ENCODE measurements at regions of chr20 and their contacts with region 1.

Region 1: DNA sequence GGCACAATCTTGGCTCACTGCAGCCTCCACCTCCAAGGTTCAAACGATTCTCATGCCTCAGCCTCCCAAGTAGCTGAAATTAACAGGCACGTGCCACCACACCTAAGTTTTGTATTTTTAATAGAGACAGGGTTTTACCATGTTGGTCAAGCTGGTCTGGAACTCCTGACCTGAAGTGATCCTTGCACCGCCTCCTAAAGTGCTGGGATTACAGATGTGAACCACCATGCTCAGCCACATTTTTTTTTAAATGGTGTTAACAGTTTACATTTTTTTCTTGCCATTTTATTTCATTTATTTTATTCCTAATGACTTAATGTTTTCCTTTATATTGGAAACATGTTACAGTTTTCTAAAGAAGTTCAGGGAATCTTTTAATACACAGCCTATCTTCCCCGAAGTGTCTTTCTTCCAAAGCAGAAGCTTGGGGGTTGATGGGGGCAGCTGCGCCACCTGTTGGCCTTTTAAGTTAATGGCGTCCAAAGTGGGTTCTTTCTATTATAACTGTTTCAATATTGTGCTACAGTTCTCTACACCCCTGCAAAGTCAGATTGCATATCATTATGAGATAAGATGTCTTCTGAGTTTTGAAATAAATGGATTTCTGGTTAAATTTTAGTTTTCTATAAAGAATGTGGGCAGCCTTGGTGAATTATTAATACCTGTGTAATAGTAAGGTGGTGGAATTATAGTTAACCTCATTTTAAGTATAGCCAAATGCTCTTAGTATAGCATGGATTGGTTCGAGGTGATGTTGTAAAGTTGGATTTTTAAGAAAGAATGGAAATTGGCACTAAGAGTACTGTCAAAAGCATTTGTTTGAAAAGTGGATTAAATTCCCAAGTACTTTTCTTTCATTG is 42.0 kb upstream of the PLCG1 start:
- DNase-seq: peak; percentile 68
- ATAC-seq: peak; percentile 54
- H3K4me3 Mint-ChIP-seq: no peak overlapping the region
- H3K27ac Mint-ChIP-seq: no peak overlapping the region
- H3K4me1 Mint-ChIP-seq: peaks cover 10% of the 10 kb centered on the region
- H3K27me3 Mint-ChIP-seq: no peaks in the 10 kb centered on the region

Region 2: GRCh38 chr20:40970201-40970600 is 125.1 kb before region 1 on chr20:
- CTCF ChIA-PET with region 1: interaction called, 43 read pairs
- POLR2A ChIA-PET with region 1: no interaction called
- intact Hi-C with region 1: loop called (anchors 1 kb)
- DNase-seq: no peak
- ATAC-seq: no peak
- H3K4me3 Mint-ChIP-seq: no peak overlapping the region
- H3K27ac Mint-ChIP-seq: no peak overlapping the region
- H3K4me1 Mint-ChIP-seq: peaks cover 9% of the 10 kb centered on the region
- H3K27me3 Mint-ChIP-seq: peaks cover 6% of the 10 kb centered on the region

Region 3: GRCh38 chr20:41028348-41029148 is 66.8 kb before region 1 on chr20 and contains the start of gene TOP1:
- CTCF ChIA-PET with region 1: interaction called, 7 read pairs
- POLR2A ChIA-PET with region 1: interaction called, 3 read pairs
- intact Hi-C with region 1: loop called in 1 of 2 experiments (anchors 2 kb)
- DNase-seq: peak; percentile 100
- ATAC-seq: peak; percentile 98
- H3K4me3 Mint-ChIP-seq: peak within 1 kb of the TSS; percentile 84
- H3K27ac Mint-ChIP-seq: peak within 1 kb of the TSS; percentile 92
- H3K4me1 Mint-ChIP-seq: peaks cover 45% of the 10 kb centered on the region
- H3K27me3 Mint-ChIP-seq: no peaks in the 10 kb centered on the region
- total RNA-seq, gene TOP1: 111 to 124 TPM

Region 4: DNA sequence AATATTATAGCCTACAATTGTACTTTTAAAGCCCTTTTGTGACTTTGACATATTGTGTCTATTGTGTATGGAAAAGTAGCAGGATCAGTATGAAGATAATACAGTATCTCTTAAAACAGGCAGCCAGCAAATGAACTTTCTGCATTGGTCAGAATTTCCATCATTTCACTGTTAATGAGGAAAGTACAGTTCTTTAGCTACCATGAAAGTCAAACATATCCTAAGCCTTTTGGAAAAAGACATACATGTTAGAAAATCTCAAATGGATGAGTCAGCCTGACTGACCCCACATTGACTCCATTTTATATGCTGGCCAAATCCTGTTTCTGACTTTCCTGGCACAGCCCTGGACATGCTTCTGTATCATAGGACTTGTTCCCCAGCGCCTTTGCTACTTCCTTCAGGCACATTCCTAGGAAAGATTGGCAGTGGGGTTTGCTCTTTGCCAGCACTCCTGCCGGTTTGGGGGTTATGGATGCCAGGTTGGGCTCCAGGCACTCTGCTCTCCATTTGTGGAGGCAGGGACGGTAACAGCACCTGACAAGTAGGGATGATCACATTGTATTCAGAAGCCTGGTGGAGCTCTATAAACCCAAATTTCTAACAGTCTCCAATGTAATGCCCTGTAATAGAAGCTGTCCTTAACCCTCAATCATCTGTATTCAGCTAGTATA is 23.0 kb before region 1 on chr20:
- CTCF ChIA-PET with region 1: interaction called, 11 read pairs
- POLR2A ChIA-PET with region 1: no interaction called
- intact Hi-C with region 1: no loop called
- DNase-seq: no peak
- ATAC-seq: peak; percentile 31
- H3K4me3 Mint-ChIP-seq: no peak overlapping the region
- H3K27ac Mint-ChIP-seq: peak overlapping the region; percentile 70
- H3K4me1 Mint-ChIP-seq: peaks cover 79% of the 10 kb centered on the region
- H3K27me3 Mint-ChIP-seq: no peaks in the 10 kb centered on the region

Region 5: GRCh38 chr20:41161886-41162285 is 66.5 kb after region 1 on chr20:
- CTCF ChIA-PET with region 1: interaction called, 12 read pairs
- POLR2A ChIA-PET with region 1: interaction called, 3 read pairs
- intact Hi-C with region 1: no loop called
- DNase-seq: no peak
- ATAC-seq: no peak
- H3K4me3 Mint-ChIP-seq: no peak overlapping the region
- H3K27ac Mint-ChIP-seq: peak overlapping the region; percentile 72
- H3K4me1 Mint-ChIP-seq: peaks cover 59% of the 10 kb centered on the region
- H3K27me3 Mint-ChIP-seq: no peaks in the 10 kb centered on the region

Measured in activated CD4-positive, alpha-beta T cell treated with anti-CD3 and anti-CD28 coated beads for 36 hours (primary cell).